Breast epithelium (tissue), 4 donors: ENCODE measurements at regions of chr12 and their contacts with region 1.

Region 1: GRCh38 chr12:59499774-59500173 is 96.1 kb upstream of the SLC16A7 start:
- DNase-seq: no peak
- H3K4me3 ChIP-seq: no peak overlapping the region
- H3K27ac ChIP-seq: no peak overlapping the region
- H3K4me1 ChIP-seq: no peaks in the 10 kb centered on the region
- H3K27me3 ChIP-seq: no peaks in the 10 kb centered on the region
- CTCF ChIP-seq: no peak
- POLR2A ChIP-seq: no peak

Region 2: DNA sequence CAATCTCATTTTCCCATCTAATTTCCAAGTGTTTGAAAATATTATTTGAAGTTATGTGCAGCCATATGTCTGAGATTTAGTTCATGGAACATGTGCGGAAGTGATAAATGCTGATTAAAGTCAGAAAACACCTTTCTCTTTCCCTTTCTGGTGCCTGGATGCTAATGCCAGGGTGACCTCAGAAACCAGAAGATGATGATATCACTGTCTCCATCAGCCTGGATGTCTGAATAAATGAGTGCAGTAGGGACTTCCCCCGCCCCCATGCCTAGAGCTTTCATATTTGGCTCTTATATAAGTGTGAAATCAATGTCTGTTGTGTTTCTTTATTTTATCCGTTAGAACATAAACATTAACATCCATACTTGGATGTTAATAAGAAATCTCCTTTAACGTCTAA is 317.6 kb before region 1 on chr12:
- intact Hi-C with region 1: no loop called
- DNase-seq: no peak
- H3K4me3 ChIP-seq: no peak overlapping the region
- H3K27ac ChIP-seq: no peak overlapping the region
- H3K4me1 ChIP-seq: no peaks in the 10 kb centered on the region
- H3K27me3 ChIP-seq: no peaks in the 10 kb centered on the region
- CTCF ChIP-seq: no peak
- POLR2A ChIP-seq: no peak

Region 3: GRCh38 chr12:59472273-59472672 is 27.5 kb before region 1 on chr12:
- intact Hi-C with region 1: no loop called
- DNase-seq: no peak
- H3K4me3 ChIP-seq: no peak overlapping the region
- H3K27ac ChIP-seq: no peak overlapping the region
- H3K4me1 ChIP-seq: no peaks in the 10 kb centered on the region
- H3K27me3 ChIP-seq: no peaks in the 10 kb centered on the region
- CTCF ChIP-seq: no peak
- POLR2A ChIP-seq: no peak

Region 4: GRCh38 chr12:59761542-59761941 is 261.8 kb after region 1 on chr12:
- intact Hi-C with region 1: loop called (anchors 2 kb)
- DNase-seq: no peak
- H3K4me3 ChIP-seq: no peak overlapping the region
- H3K27ac ChIP-seq: no peak overlapping the region
- H3K4me1 ChIP-seq: no peaks in the 10 kb centered on the region
- H3K27me3 ChIP-seq: no peaks in the 10 kb centered on the region
- CTCF ChIP-seq: no peak
- POLR2A ChIP-seq: no peak